ENCODE measurements at regions of chr1 and their contacts with region 1.

Region 1: DNA sequence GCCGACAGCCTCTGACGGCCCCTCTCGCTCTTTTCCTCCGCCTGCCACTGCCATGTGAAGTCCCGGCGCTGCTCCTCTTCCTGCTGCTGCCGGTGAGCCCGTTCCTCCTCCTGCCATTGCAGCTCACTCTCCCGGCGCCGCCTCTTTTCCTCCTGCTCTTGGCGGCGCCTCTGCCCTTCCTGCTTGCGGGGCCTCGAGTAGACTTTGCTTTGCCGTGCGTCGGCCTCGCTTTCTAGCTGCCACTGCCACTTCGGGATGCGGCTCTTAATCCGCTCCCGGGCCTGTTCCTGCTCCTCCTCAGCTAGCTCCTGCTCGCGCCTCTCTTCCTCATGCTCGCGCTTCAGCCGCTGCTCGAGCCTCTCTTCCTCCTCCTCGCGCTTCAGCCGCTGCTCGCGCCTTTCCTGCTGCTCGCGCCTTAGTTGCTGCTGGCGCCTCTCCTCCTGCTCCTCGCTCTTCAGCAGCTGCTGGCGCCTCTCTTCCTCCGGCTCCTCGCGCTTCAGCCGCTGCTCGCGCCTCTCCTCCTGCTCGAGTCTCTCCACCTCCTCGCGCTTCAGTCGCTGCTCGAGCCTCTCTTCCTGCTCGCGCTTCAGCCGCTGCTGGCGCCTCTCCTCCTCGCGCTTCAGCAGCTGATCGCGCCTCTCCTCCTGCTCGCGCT is 4.3 kb downstream of the TCHH start:
- DNase-seq: no peak
- H3K4me3 ChIP-seq: peak overlapping the region; percentile 39
- CTCF ChIP-seq: no peak

Region 2: DNA sequence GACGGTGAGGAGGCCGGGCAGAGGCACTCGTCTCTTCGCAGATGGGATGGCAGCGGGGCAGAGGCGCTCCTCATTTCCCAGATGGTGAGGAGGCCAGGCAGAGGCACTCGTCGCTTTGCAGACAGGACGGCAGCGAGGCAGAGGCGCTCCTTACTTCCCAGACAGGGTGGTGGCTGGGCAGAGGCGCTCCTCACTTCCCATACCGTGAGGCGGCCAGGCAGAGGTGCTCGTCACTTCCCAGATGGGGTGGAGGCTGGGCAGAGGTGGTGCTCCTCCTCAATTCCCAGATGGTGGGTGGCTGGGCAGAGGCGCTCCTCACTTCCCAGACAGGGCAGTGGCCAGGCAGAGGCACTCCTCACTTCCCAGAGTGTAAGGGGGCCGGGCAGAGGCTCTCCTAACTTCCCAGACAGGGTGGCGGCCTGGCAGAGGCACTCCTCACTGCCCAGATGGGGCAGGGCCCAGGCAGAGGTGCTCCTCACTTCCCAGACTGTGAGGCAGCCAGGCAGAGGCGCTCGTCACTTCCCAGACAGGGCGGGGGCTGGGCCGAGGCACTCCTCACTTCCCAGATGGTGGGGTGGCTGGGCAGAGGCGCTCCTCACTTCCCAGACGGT is 32.1 kb before region 1 on chr1:
- in situ Hi-C with region 1: no loop called
- DNase-seq: no peak
- H3K4me3 ChIP-seq: no peak overlapping the region
- CTCF ChIP-seq: no peak

Region 3: DNA sequence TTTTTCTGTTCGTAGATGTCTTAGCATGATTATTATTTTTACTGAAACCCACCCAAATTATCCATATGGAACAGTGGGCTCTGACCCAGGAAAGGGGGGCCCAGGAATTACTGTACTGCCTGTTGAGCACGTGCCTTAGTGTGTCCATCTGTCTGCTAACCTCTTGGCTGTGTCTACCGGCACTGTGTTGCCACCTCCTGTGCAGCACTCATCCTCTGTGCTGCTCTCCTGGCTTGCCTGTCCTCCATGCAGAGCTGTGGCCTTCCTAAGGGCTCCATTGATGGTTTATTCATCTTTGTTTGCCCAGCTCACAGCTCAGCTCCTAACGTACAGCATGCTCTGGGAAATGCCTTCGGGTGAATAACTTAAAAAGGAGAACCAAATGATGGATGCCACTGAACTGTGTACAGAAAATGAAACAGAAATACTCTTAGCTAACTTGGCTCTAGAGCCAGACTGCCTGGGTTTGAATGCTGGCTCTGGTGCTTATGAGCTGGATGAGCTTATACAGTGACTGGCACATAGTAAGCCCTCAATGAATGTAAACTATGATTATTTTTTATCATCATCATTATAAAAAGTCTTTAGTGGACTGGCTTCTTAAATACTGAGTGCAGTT is 59.4 kb after region 1 on chr1:
- in situ Hi-C with region 1: loop called (anchors 5 kb)
- DNase-seq: no peak
- H3K4me3 ChIP-seq: no peak overlapping the region
- CTCF ChIP-seq: no peak